Aorta (tissue), 5 donors: ENCODE measurements at regions of chr1 and their contacts with region 1.

Region 1: DNA sequence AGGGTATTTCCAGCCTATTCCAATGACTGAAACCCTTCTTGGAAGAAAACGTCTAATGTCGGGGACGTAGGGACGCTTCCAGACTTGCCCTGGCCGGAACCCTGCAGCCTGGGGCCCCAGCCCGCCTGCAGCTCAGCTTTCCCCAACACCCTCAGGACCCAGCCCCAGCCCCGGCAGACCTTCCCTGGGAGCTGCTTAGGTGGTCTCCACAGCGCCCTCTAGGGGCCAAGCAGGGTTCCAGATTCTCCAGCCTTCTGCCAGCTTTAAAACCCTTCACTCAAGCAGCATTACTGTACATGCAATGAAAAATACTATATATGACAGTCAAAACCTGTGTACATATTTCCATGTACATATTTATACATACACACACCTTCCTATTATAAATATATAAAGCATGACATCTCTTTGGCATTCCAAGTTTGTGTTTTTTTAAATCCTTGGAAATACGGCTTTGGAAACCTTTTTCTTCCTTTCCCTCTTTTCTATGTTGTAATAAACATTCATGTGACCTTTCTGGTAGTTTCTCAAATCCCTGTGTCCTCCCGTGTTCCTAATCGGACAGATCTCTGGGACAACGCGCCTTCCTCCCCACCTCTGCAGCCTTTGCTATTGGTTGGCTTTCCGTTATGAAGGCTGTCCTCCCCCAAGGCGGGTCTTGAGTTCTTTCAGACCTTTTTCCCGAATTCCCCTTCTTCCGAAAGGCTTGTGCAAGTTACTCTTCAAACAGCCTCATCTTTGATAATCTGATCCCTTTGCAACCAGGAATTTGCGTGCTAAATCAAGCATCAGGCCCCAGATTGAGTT is 60.3 kb downstream of the STUM start:
- DNase-seq: peak; percentile 74 to 87
- ATAC-seq: peak; percentile 66
- H3K4me3 ChIP-seq: no peak overlapping the region
- H3K27ac ChIP-seq: no peak overlapping the region
- H3K4me1 ChIP-seq: no peaks in the 10 kb centered on the region
- H3K27me3 ChIP-seq: no peaks in the 10 kb centered on the region

Region 2: GRCh38 chr1:226209307-226210059 is 399.4 kb before region 1 on chr1:
- intact Hi-C with region 1: no loop called
- DNase-seq: no peak
- ATAC-seq: no peak
- H3K4me3 ChIP-seq: no peak overlapping the region
- H3K27ac ChIP-seq: no peak overlapping the region
- H3K4me1 ChIP-seq: no peaks in the 10 kb centered on the region
- H3K27me3 ChIP-seq: no peaks in the 10 kb centered on the region

Region 3: DNA sequence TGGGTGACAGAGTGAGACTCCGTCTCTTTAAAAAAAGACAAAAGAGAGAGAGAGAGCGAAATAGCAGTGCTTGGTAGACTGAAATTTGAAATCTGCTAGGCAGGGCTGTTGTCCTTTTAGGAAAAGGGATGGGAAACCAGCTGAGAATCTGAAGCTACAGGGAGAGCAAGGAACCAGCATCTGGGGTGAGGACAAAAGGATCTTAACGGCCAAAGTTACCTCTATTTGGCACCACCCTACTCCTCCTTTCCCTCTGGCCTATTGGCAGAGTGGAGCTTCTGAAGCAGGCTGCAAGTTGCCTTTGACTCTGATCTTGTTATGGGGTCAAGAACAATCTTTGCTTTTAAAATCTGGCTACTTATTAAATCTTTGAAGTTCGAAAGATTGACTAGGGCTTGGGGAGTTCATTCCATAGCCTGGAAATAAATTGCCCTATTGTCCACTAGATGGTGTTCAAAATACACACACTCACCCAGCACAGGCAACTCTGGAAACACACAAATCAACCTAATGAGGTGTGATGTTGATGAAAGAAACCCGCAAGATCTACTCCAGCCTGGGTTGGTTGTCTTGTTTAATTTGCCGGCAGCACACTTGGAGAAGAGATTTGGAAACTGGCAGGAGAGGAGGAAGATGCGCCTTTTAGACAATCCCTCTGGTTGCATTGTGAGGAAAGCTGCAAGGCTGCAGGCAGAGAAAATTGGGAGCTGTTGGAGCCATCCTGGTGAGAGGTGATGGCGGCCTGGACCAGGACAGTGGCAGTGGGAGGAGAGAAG is 184.5 kb before region 1 on chr1:
- intact Hi-C with region 1: loop called in 1 of 2 experiments (anchors 10 kb)
- DNase-seq: no peak
- ATAC-seq: no peak
- H3K4me3 ChIP-seq: no peak overlapping the region
- H3K27ac ChIP-seq: no peak overlapping the region
- H3K4me1 ChIP-seq: no peaks in the 10 kb centered on the region
- H3K27me3 ChIP-seq: no peaks in the 10 kb centered on the region

Region 4: GRCh38 chr1:226547754-226548191 is 61.1 kb before region 1 on chr1:
- intact Hi-C with region 1: loop called (anchors 2 kb)
- DNase-seq: peak; percentile 83 to 92
- ATAC-seq: peak; percentile 85
- H3K4me3 ChIP-seq: no peak overlapping the region
- H3K27ac ChIP-seq: no peak overlapping the region
- H3K4me1 ChIP-seq: no peaks in the 10 kb centered on the region
- H3K27me3 ChIP-seq: no peaks in the 10 kb centered on the region